ENCODE measurements at regions of chr3 and their contacts with region 1.

Region 1: DNA sequence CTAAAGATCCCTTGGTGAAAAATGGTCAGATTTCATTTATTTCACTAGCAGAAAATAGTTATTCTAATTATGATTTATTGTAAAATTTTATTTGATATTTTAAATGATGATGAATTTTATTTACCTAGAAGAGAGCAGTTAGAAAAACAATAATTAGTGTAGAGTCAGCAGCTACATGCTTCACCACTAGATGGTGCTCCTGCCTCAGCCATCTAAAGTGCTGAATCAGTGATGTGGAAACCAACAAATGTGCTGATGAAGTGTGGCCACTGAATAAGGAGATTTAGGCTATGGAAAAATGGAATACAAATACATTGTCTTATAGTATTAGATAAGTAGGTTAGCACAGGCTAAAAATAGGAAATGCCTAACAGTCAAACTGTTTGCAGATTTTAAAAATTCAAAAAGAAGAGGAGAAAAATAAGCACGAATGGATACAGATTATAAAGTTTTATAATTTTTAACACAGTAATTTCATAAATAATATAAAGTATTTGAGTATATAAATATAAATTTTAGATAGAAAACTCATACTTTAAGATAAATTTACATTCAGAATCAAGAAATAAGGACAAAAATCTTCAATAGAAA is 109.8 kb downstream of the PPP2R3A start:
- DNase-seq: no peak
- H3K4me3 ChIP-seq: no peak overlapping the region
- CTCF ChIP-seq: peak; percentile 74

Region 2: DNA sequence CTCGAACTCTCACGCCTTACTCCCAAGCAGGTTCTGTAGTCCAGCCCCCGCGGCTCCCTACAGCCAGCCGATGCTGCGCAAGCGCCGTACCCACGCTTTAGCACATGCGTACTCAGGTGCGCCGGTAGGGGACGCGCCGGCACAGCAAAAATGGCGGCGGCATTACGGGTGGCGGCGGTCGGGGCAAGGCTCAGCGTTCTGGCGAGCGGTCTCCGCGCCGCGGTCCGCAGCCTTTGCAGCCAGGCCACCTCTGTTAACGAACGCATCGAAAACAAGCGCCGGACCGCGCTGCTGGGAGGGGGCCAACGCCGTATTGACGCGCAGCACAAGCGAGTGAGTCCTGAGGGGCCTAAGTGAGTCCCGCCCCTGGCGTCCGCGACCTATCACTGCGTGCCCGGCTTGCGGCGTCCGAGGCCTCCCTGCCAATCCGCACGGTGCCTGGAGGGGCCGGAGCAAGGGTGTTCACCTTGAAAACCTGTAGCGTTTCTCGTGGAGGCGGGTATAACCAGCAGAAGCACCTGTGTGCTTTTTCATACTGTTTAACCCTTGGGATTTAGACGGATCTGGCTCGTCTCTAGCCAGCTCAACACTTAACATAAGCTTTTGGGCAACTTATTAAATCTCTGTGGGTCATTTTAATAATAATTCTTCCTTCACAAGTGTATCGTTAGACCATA is 175.1 kb after region 1 on chr3 and contains the start of gene PCCB:
- CTCF ChIA-PET with region 1: interaction called, 11 read pairs
- POLR2A ChIA-PET with region 1: no interaction called
- DNase-seq: peak; percentile 52
- H3K4me3 ChIP-seq: peak within 1 kb of the TSS; percentile 82
- CTCF ChIP-seq: peak; percentile 83

Region 3: DNA sequence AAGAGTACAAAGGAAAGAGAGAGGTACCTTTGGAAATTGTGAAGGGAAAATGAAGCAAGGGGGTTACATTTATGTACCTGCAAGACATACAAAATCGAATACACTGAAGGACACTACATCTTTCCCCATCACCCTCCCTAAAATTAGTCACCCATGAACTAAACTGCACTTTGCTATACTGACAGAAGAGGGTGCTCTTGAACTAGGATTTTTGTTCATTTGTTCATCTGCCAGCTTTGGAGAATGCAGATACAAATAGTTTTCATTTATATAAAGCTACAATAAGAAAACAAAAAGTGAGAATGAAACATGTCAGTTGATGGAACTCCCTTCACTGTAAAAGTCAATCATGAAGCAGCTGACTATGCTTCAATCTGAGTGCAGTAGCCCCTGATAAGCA is 230.6 kb after region 1 on chr3:
- CTCF ChIA-PET with region 1: interaction called, 21 read pairs
- POLR2A ChIA-PET with region 1: no interaction called
- DNase-seq: peak; percentile 28
- H3K4me3 ChIP-seq: no peak overlapping the region
- CTCF ChIP-seq: peak; percentile 57

Measured in AG04449 (cell line).